Ovary (tissue), 10 donors: ENCODE measurements at regions of chr3 and their contacts with region 1.

Region 1: DNA sequence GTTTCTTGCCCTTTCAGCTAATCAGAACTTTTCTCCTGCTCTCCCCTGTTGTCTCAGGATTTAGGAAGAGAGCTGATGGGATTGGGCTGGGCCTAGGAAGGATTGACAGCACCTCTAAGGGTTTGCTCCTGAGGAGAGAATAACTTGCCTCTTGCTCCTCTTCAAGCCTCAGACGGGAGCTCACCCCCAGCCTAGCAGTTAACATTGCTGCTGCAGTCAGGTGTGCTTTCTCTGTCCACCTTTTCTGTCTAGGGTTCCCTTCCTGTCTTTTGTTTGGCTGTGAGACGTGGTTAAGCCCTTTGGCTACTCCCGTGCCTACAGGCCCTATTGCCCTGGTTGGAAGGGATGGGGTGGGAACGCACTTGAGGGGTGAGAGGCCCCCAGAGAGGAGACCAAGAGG is 20.1 kb downstream of the TMEM108 start:
- DNase-seq: no peak
- H3K4me3 ChIP-seq: no peak overlapping the region
- H3K27ac ChIP-seq: no peak overlapping the region
- H3K4me1 ChIP-seq: no peaks in the 10 kb centered on the region
- H3K27me3 ChIP-seq: no peaks in the 10 kb centered on the region
- CTCF ChIP-seq: no peak
- EP300 ChIP-seq: no peak
- POLR2A ChIP-seq: no peak

Region 2: DNA sequence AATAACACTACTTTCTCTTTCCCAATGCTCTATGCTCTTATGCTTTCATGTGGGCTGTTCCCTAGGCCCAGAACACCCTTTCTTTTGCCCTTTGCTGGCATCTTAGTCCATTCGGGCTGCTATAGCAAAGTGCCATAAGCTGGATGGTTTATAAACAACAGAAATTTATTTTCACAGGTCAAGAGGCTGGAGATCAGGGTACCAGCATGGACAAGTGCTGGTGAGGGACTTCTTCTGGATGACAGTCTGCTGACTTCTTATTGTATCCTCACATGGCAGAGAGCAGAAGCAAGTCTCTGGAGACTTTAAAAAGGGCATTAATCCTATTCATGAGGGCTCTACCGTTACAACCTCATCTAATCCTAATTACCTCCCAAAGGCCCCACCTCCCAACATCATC is 24.2 kb before region 1 on chr3:
- intact Hi-C with region 1: loop called in 1 of 4 experiments (anchors 2 kb)
- DNase-seq: no peak
- H3K4me3 ChIP-seq: no peak overlapping the region
- H3K27ac ChIP-seq: no peak overlapping the region
- H3K4me1 ChIP-seq: no peaks in the 10 kb centered on the region
- H3K27me3 ChIP-seq: no peaks in the 10 kb centered on the region
- CTCF ChIP-seq: no peak
- EP300 ChIP-seq: no peak
- POLR2A ChIP-seq: no peak